ENCODE measurements at regions of chr3 and their contacts with region 1.

Region 1: DNA sequence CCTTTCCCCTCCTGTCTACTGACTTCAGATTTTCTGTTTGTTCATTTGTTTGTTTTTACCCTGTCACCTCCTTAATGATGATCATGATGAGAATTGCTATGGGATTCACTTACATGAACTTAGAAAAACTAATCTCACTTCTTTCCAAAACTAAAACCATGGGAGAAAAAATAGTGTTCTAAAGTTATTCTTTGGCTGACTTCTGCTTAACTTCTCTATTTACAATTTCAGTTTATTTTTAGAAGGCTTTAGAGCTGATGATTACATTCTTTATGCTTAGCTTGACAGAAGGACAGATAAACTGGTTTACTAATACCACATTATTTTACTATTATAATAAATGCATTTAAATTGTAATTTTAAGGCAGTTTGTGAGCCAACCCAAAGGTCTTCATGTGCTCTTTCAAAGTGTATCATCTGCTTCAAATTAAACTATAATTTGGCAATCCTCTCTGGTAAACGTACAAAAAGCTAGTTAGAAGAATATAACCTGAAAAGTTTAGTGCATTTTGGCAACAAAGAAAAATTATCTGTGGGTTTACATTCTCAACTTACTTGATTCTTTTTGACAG is 676.8 kb upstream of the UBE2E2 start:
- DNase-seq: no peak

Region 2: DNA sequence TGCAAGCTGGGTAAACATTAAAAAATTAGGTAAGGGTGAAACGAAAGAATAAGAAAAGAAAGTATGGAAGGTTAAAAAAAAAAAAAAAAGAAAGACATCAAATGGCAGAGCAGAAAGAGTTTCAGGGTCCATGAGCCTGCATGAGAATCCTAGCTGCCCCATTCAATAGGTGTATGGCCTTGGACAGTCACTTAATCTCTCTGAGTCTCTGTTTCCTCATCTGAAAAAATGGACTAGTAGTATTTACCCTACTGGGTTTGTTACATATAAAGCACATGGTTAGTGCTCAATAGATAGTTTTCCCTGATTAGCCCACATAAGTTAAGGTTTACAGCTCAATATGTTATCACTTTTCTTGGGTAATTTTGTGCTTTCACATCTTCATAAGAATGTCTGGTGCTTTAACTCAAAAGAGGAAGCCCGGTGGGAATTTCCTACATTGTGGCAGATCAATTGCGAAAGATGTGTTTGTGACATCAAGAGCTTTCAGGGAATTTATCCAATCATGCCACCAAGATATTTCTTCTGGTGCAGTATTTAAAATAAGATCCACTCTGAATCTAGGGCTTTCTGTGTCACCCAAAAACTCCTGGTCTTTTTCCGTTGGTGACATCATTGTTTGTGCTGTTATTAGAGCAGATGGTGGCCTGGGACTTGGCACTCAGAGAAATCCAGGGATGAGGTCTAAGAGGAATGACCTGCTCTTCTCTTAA is 1222.2 kb after region 1 on chr3:
- intact Hi-C with region 1: loop called (anchors 5 kb)
- DNase-seq: no peak